ENCODE measurements at regions of chr4 and their contacts with region 1.

Region 1: GRCh38 chr4:75995727-75996126 is 5.0 kb upstream of the SDAD1 start:
- DNase-seq: peak; percentile 52
- H3K4me3 ChIP-seq: no peak overlapping the region
- H3K27ac ChIP-seq: no peak overlapping the region
- H3K4me1 ChIP-seq: no peaks in the 10 kb centered on the region
- H3K27me3 ChIP-seq: no peaks in the 10 kb centered on the region
- CTCF ChIP-seq: peak; percentile 30 to 60

Region 2: GRCh38 chr4:75561790-75562189 is 433.9 kb before region 1 on chr4:
- CTCF ChIA-PET with region 1: no interaction called
- dilution Hi-C with region 1: no loop called
- in situ Hi-C with region 1: no loop called
- intact Hi-C with region 1: no loop called
- DNase-seq: peak; percentile 23
- H3K4me3 ChIP-seq: no peak overlapping the region
- H3K27ac ChIP-seq: no peak overlapping the region
- H3K4me1 ChIP-seq: no peaks in the 10 kb centered on the region
- H3K27me3 ChIP-seq: no peaks in the 10 kb centered on the region
- CTCF ChIP-seq: no peak

Region 3: GRCh38 chr4:75940692-75941253 is 55.0 kb before region 1 on chr4 and contains the start of gene NAAA:
- CTCF ChIA-PET with region 1: no interaction called
- dilution Hi-C with region 1: no loop called
- in situ Hi-C with region 1: no loop called
- intact Hi-C with region 1: no loop called
- DNase-seq: peak; percentile 53
- H3K4me3 ChIP-seq: peak within 1 kb of the TSS; percentile 61 to 73 (median 71)
- H3K27ac ChIP-seq: peak within 1 kb of the TSS; percentile 15
- H3K4me1 ChIP-seq: peaks cover 7% of the 10 kb centered on the region
- H3K27me3 ChIP-seq: no peaks in the 10 kb centered on the region
- CTCF ChIP-seq: no peak
- total RNA-seq, gene NAAA: 16.1 to 21.3 TPM

Region 4: DNA sequence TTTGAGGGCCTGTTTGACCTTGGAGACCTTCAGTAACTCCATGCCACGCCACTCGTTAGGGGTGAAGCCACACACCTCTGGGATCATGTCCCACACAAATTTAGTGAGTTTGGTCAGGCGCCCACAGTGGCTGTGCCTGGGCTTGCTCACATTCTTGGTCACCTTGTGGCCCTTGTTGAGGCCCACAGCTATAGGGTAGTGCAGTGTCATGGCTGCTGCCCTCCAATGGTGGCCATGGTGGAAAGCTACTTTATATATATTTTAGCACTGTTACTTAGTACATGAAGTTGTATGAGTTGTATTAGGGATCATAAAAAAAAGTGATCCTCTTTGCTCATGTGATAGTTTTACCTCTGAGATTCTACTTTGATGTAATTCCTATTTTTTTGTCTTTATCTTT is 41.1 kb after region 1 on chr4:
- CTCF ChIA-PET with region 1: no interaction called
- dilution Hi-C with region 1: no loop called
- in situ Hi-C with region 1: no loop called
- intact Hi-C with region 1: no loop called
- DNase-seq: no peak
- H3K4me3 ChIP-seq: no peak overlapping the region
- H3K27ac ChIP-seq: no peak overlapping the region
- H3K4me1 ChIP-seq: peaks cover 10% of the 10 kb centered on the region
- H3K27me3 ChIP-seq: no peaks in the 10 kb centered on the region
- CTCF ChIP-seq: no peak

Region 5: GRCh38 chr4:76067652-76068286 is 72.0 kb after region 1 on chr4:
- CTCF ChIA-PET with region 1: no interaction called
- dilution Hi-C with region 1: no loop called
- in situ Hi-C with region 1: loop called (anchors 5 kb)
- intact Hi-C with region 1: loop called (anchors 1 kb)
- DNase-seq: peak; percentile 55
- H3K4me3 ChIP-seq: no peak overlapping the region
- H3K27ac ChIP-seq: no peak overlapping the region
- H3K4me1 ChIP-seq: peaks cover 4% of the 10 kb centered on the region
- H3K27me3 ChIP-seq: no peaks in the 10 kb centered on the region
- CTCF ChIP-seq: peak; percentile 78 to 87

Region 6: DNA sequence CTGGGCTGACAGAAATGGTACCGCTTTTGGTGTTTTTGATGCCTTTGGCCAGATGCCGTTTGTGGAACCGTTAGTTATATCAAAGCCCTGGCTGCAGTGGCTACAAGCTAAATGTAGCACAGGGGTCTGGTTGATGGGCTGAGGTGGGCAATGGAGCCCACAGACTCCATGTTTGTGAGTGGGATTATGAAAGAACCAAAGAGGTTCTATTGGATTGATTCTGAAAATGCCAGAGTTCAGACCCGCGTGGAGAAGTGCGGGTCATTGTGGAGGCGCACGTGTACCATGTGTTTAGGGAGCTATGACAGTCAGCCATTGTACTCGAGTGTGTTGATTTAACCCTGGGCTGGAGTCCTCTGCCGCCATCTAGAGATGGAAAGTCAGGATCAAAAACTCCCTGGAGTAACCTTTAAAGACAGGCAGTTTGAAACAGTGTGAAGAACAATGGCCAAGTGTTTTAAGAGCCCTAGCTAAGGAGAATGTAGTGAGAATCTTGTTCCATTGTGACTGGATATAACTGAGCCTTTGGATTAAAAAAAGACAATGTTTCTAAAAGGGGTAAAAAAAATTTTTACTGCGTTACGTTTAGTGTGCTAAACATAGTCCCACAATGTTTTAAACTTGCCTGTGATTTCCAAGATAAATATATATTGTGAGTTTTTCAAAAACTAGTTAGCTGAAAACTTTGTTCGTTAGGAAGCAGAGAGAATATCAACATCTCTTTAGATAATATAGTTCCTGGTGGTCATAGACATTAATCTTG is 91.5 kb after region 1 on chr4:
- CTCF ChIA-PET with region 1: interaction called, 8 read pairs
- dilution Hi-C with region 1: loop called (anchors 5 kb)
- in situ Hi-C with region 1: no loop called
- intact Hi-C with region 1: loop called (anchors 1 kb)
- DNase-seq: peak; percentile 82
- H3K4me3 ChIP-seq: no peak overlapping the region
- H3K27ac ChIP-seq: no peak overlapping the region
- H3K4me1 ChIP-seq: peaks cover 21% of the 10 kb centered on the region
- H3K27me3 ChIP-seq: no peaks in the 10 kb centered on the region
- CTCF ChIP-seq: peak; percentile 76 to 82

Region 7: DNA sequence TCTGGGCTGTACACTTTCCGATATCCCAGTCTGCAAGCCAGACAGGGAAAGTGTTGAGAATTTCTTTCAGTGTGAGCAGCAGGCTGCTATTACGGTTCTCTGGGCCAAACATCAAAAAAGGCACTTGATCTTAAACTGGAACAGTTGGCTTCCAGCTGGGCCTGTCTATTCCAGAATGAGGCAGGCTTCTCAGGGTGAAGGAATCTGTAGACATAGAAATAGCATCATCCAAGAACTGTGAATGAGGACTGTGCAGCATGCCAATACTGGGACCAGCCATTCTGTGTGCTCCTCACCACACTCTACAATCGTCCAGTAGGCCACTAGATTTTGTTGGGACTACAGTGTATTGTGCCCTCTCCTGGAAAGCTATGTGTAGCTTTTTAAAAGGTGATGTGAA is 109.9 kb after region 1 on chr4:
- CTCF ChIA-PET with region 1: interaction called, 14 read pairs
- dilution Hi-C with region 1: no loop called
- in situ Hi-C with region 1: no loop called
- intact Hi-C with region 1: no loop called
- DNase-seq: no peak
- H3K4me3 ChIP-seq: no peak overlapping the region
- H3K27ac ChIP-seq: no peak overlapping the region
- H3K4me1 ChIP-seq: no peaks in the 10 kb centered on the region
- H3K27me3 ChIP-seq: no peaks in the 10 kb centered on the region
- CTCF ChIP-seq: peak in 1 of 2 donors; percentile 20

Region 8: GRCh38 chr4:76504613-76505465 is 509.1 kb after region 1 on chr4:
- CTCF ChIA-PET with region 1: no interaction called
- dilution Hi-C with region 1: no loop called
- in situ Hi-C with region 1: no loop called
- intact Hi-C with region 1: loop called (anchors 10 kb)
- DNase-seq: peak; percentile 27
- H3K4me3 ChIP-seq: no peak overlapping the region
- H3K27ac ChIP-seq: no peak overlapping the region
- H3K4me1 ChIP-seq: peaks cover 3% of the 10 kb centered on the region
- H3K27me3 ChIP-seq: no peaks in the 10 kb centered on the region
- CTCF ChIP-seq: peak; percentile 49 to 67